ENCODE measurements at regions of chr10 and their contacts with region 1.

Region 1: DNA sequence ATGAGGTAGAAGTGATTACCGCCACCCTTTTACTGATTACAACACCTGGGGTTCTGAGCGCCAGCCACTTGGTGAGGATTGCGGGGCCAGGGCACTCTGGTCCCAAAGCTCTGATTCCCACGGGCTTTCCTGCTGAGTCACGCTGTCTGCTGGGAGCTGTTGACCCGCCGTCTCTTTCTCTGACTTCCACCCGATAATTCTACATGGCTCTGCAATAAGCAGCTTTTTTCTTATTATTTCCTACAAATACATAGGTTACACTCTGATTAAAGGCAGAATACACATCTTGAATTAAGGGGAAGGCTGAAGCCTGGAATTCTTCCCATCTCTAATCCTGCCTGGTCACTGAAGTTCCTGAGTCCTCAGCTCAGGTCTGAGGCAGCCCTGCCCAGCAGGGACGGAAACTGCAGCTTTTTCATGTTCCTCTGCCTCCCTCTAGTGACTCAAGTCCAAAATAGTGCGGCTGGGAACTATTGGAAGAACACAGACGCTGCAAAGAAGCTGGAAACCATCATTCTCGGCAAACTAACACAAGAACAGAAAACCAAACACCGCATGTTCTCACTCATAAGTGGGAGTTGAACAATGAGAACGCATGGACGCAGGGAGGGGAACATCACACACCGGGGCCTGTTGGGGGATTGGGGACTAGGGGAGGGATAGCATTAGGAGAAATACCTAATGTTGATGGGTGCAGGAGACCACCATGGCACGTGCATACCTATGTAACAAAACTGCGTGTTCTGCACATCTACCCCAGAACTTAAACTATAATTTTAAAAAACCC is 178.3 kb downstream of the PRKCQ start:
- DNase-seq: peak; percentile 74
- ATAC-seq: peak; percentile 95
- H3K4me3 Mint-ChIP-seq: peak overlapping the region; percentile 42
- H3K27ac Mint-ChIP-seq: peak overlapping the region; percentile 38; the same call in 1 of the 2 replicates
- H3K4me1 Mint-ChIP-seq: peaks cover 28% of the 10 kb centered on the region
- H3K27me3 Mint-ChIP-seq: no peaks in the 10 kb centered on the region; the same call in 1 of the 2 replicates
- CTCF ChIP-seq: peak; percentile 62

Region 2: GRCh38 chr10:6086375-6087233 is 315.2 kb before region 1 on chr10:
- CTCF ChIA-PET with region 1: interaction called, 47 read pairs
- POLR2A ChIA-PET with region 1: no interaction called
- DNase-seq: peak; percentile 92
- ATAC-seq: peak; percentile 68
- H3K4me3 Mint-ChIP-seq: no peak overlapping the region
- H3K27ac Mint-ChIP-seq: peak overlapping the region; percentile 76; the same call in 1 of the 2 replicates
- H3K4me1 Mint-ChIP-seq: peaks cover 38% of the 10 kb centered on the region
- H3K27me3 Mint-ChIP-seq: no peaks in the 10 kb centered on the region; the same call in 1 of the 2 replicates
- CTCF ChIP-seq: peak; percentile 55

Region 3: GRCh38 chr10:6128591-6129251 is 273.0 kb before region 1 on chr10:
- CTCF ChIA-PET with region 1: interaction called, 19 read pairs
- POLR2A ChIA-PET with region 1: no interaction called
- DNase-seq: no peak
- ATAC-seq: peak; percentile 21; the same call in 1 of the 2 replicates
- H3K4me3 Mint-ChIP-seq: no peak overlapping the region
- H3K27ac Mint-ChIP-seq: no peak overlapping the region
- H3K4me1 Mint-ChIP-seq: peaks cover 17% of the 10 kb centered on the region
- H3K27me3 Mint-ChIP-seq: no peaks in the 10 kb centered on the region; the same call in 1 of the 2 replicates
- CTCF ChIP-seq: no peak

Region 4: GRCh38 chr10:6171881-6172695 is 229.7 kb before region 1 on chr10:
- CTCF ChIA-PET with region 1: interaction called, 13 read pairs
- POLR2A ChIA-PET with region 1: no interaction called
- DNase-seq: no peak
- ATAC-seq: no peak
- H3K4me3 Mint-ChIP-seq: no peak overlapping the region
- H3K27ac Mint-ChIP-seq: peak overlapping the region; percentile 66; the same call in 1 of the 2 replicates
- H3K4me1 Mint-ChIP-seq: peaks cover 36% of the 10 kb centered on the region
- H3K27me3 Mint-ChIP-seq: no peaks in the 10 kb centered on the region
- CTCF ChIP-seq: no peak

Region 5: GRCh38 chr10:6211671-6212635 is 189.8 kb before region 1 on chr10:
- CTCF ChIA-PET with region 1: interaction called, 13 read pairs
- POLR2A ChIA-PET with region 1: no interaction called
- DNase-seq: no peak
- ATAC-seq: peak; percentile 19
- H3K4me3 Mint-ChIP-seq: no peak overlapping the region
- H3K27ac Mint-ChIP-seq: peak overlapping the region; percentile 5; the same call in 1 of the 2 replicates
- H3K4me1 Mint-ChIP-seq: peaks cover 27% of the 10 kb centered on the region
- H3K27me3 Mint-ChIP-seq: no peaks in the 10 kb centered on the region
- CTCF ChIP-seq: no peak

Region 6: GRCh38 chr10:6314620-6315205 is 87.0 kb before region 1 on chr10:
- CTCF ChIA-PET with region 1: interaction called, 15 read pairs
- POLR2A ChIA-PET with region 1: no interaction called
- DNase-seq: no peak
- ATAC-seq: no peak
- H3K4me3 Mint-ChIP-seq: no peak overlapping the region
- H3K27ac Mint-ChIP-seq: no peak overlapping the region
- H3K4me1 Mint-ChIP-seq: peaks cover 5% of the 10 kb centered on the region
- H3K27me3 Mint-ChIP-seq: no peaks in the 10 kb centered on the region; the same call in 1 of the 2 replicates
- CTCF ChIP-seq: no peak

Region 7: GRCh38 chr10:6356280-6356793 is 45.4 kb before region 1 on chr10:
- CTCF ChIA-PET with region 1: no interaction called
- POLR2A ChIA-PET with region 1: no interaction called
- DNase-seq: no peak
- ATAC-seq: no peak
- H3K4me3 Mint-ChIP-seq: no peak overlapping the region
- H3K27ac Mint-ChIP-seq: no peak overlapping the region
- H3K4me1 Mint-ChIP-seq: no peaks in the 10 kb centered on the region
- H3K27me3 Mint-ChIP-seq: peaks cover 2% of the 10 kb centered on the region; the same call in 1 of the 2 replicates
- CTCF ChIP-seq: no peak

Region 8: DNA sequence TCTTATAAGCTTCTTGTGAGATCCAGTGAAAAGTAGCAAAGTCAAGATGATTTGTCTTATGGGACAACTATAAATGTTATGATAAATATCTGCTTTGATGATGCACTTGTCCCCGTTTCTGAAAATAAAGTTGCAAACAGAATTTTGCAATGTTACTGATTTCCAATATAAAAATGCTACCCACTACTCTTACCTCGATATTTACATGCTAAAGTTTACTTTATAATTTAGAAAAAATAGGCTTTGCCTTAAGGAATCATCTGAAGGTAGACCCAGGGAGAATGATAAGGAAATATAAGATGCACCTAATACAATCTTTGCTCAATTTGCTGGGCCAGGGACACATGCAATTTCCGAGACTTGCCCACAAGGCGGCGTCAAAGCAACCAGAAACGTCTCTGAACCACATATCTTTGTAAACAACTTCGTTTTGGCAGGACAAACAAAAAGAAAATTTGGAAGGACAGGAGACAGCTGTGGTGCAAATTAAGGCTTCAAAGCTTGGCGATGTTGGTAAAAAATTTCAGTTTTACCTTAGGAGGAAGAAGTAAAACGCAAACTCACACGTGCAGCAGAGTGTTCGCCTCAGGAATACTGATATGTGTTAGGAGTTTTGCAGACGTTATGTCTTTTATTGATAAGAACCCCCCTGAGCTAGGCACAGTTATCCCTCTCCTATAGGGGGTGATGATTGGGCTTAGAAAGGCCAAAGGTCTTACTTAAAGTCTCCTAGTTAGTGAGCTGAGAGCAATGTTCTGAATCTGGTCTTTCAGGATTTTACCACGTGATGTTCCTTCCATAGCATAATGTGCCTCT is 44.0 kb after region 1 on chr10:
- CTCF ChIA-PET with region 1: interaction called, 10 read pairs
- POLR2A ChIA-PET with region 1: no interaction called
- DNase-seq: peak; percentile 51
- ATAC-seq: peak; percentile 48; the same call in 1 of the 2 replicates
- H3K4me3 Mint-ChIP-seq: no peak overlapping the region
- H3K27ac Mint-ChIP-seq: 0 out of 2 replicates have a peak overlapping the region, but pooled peaks have one; percentile 49
- H3K4me1 Mint-ChIP-seq: peaks cover 5% of the 10 kb centered on the region; the same call in 1 of the 2 replicates
- H3K27me3 Mint-ChIP-seq: no peaks in the 10 kb centered on the region
- CTCF ChIP-seq: no peak

Region 9: DNA sequence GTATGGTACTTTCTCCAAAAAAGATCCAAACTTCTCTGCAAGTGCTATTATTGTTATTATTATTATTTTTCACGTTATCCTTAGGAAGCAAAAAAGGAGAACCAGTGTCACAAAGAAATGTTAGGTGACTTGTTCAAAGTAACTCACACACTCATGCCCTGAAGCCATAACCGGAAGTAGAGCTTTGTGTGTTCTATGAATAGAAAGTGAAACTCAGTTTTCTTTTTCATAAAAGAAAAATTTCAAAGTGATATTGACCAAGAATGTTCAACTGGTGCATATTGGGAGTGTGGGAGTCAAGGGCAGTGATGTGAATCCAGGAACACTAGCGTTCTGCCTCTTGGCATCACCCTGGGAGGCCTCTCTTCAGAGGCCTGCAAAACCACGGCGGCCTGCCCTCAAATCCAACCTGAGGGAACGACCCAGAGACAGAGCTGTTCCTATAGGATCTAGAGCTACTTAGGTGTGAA is 72.2 kb after region 1 on chr10:
- CTCF ChIA-PET with region 1: no interaction called
- POLR2A ChIA-PET with region 1: no interaction called
- DNase-seq: no peak
- ATAC-seq: no peak
- H3K4me3 Mint-ChIP-seq: no peak overlapping the region
- H3K27ac Mint-ChIP-seq: no peak overlapping the region
- H3K4me1 Mint-ChIP-seq: no peaks in the 10 kb centered on the region; the same call in 1 of the 2 replicates
- H3K27me3 Mint-ChIP-seq: no peaks in the 10 kb centered on the region
- CTCF ChIP-seq: no peak

Measured in WTC11 (cell line).